Sigmoid colon (tissue), 7 donors: ENCODE measurements at regions of chr21 and their contacts with region 1.

Region 1: DNA sequence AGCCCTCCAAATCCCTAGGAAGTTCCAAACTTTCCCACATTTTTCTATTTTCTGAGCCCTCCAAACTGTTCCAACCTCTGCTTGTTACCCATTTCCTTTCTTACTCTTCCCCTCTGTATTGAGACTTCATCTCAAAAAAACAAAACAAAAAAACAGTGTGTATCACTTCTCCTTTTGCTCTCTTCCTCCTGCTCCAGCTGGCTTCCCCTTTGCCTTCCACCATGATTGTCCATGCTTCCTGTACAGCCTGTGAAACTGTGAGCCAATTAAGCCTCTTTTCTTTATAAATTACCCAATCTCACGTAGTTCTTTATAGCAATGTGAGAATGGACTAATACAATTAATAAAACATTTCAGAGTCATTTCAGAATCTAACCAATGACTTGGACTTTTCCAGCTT is 69.6 kb upstream of the KRTAP19-8 start:
- DNase-seq: no peak
- H3K4me3 ChIP-seq: no peak overlapping the region
- H3K27ac ChIP-seq: peak overlapping the region in 1 of 4 donors; percentile 31
- H3K4me1 ChIP-seq: no peaks in the 10 kb centered on the region
- H3K27me3 ChIP-seq: no peaks in the 10 kb centered on the region
- CTCF ChIP-seq: no peak
- EP300 ChIP-seq: no peak
- POLR2A ChIP-seq: no peak

Region 2: GRCh38 chr21:31198575-31198974 is 90.7 kb after region 1 on chr21:
- intact Hi-C with region 1: no loop called
- DNase-seq: no peak
- H3K4me3 ChIP-seq: no peak overlapping the region
- H3K27ac ChIP-seq: no peak overlapping the region
- H3K4me1 ChIP-seq: no peaks in the 10 kb centered on the region
- H3K27me3 ChIP-seq: no peaks in the 10 kb centered on the region
- CTCF ChIP-seq: peak; percentile 11 to 59 (median 42)
- EP300 ChIP-seq: no peak
- POLR2A ChIP-seq: no peak

Region 3: DNA sequence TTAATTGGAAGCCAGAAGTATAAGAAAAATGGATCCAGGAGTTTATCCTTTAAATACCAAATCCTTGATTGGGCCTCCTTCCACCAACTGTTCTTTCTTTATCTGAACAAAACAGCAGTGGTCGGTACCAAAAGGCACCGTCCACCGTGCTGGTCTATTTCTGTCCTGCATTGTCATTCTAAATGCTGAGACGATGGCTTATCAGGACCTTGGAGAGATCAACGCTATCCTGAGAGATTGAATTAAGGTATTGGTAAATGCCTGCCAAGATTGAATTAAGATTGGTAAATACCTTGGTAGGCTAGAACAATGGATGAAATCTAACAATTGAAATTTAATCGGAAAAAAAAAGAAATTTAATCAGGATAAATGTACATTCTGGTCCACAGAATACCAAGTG is 478.2 kb after region 1 on chr21:
- intact Hi-C with region 1: loop called (anchors 5 kb)
- DNase-seq: no peak
- H3K4me3 ChIP-seq: no peak overlapping the region
- H3K27ac ChIP-seq: no peak overlapping the region
- H3K4me1 ChIP-seq: no peaks in the 10 kb centered on the region
- H3K27me3 ChIP-seq: no peaks in the 10 kb centered on the region
- CTCF ChIP-seq: no peak
- EP300 ChIP-seq: no peak
- POLR2A ChIP-seq: no peak